ENCODE measurements at regions of chr6 and their contacts with region 1.

Region 1: DNA sequence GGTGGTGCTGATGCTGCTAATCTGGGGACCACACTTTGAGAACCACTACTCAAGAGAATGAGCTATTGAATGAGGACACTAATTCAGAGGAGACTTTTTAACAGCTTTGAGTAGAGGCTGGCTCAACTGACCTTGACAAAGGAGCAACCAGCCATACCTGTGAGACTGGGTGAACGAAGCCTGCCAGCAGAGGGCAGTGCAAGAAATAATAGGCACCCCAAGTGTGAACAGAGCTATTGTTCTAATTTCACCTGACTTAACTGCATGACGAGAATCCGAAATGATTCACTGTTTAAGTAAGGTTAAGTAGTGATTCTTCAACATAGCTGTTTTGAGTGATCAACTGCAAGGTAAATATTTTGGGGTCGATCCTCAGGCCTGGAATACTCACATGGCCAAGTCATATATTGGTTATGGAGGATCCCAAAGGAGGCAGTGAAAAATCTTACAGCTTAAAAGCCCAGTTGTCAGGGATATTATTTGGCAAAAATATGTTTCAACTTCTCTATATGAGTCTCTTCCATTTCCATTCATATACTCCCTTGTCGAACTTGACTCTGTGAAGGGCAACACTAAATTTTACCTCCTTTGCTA is 550.5 kb upstream of the MARCKS start:
- DNase-seq: peak; percentile 49
- H3K4me3 Mint-ChIP-seq: no peak overlapping the region
- H3K27ac Mint-ChIP-seq: no peak overlapping the region
- H3K4me1 Mint-ChIP-seq: no peaks in the 10 kb centered on the region
- H3K27me3 Mint-ChIP-seq: no peaks in the 10 kb centered on the region

Region 2: GRCh38 chr6:113211170-113211569 is 95.5 kb before region 1 on chr6:
- CTCF ChIA-PET with region 1: no interaction called
- POLR2A ChIA-PET with region 1: no interaction called
- DNase-seq: no peak
- H3K4me3 Mint-ChIP-seq: no peak overlapping the region
- H3K27ac Mint-ChIP-seq: no peak overlapping the region
- H3K4me1 Mint-ChIP-seq: no peaks in the 10 kb centered on the region
- H3K27me3 Mint-ChIP-seq: no peaks in the 10 kb centered on the region

Region 3: GRCh38 chr6:113858480-113859348 is 552.1 kb after region 1 on chr6:
- CTCF ChIA-PET with region 1: interaction called, 23 read pairs
- POLR2A ChIA-PET with region 1: no interaction called
- DNase-seq: peak; percentile 73
- H3K4me3 Mint-ChIP-seq: peak overlapping the region; percentile 44
- H3K27ac Mint-ChIP-seq: no peak overlapping the region
- H3K4me1 Mint-ChIP-seq: peaks cover 20% of the 10 kb centered on the region
- H3K27me3 Mint-ChIP-seq: peaks cover 20% of the 10 kb centered on the region